SK-N-SH (cell line): ENCODE measurements at regions of chr15 and their contacts with region 1.

Region 1: GRCh38 chr15:90931737-90932659 is at the start of gene HDDC3:
- DNase-seq: peak; percentile 94
- H3K4me3 ChIP-seq: peak within 1 kb of the TSS; percentile 84 to 89
- H3K27ac ChIP-seq: peak within 1 kb of the TSS; percentile 32 to 80; a peak in 3 of 4 replicates
- H3K4me1 ChIP-seq: peaks cover 13 to 41% of the 10 kb centered on the region in 2 experiments; a peak in 2 of 4 replicates
- H3K27me3 ChIP-seq: no peaks in the 10 kb centered on the region
- CTCF ChIP-seq: peak; percentile 87
- EP300 ChIP-seq: no peak
- RAD21 ChIP-seq: peak; percentile 48
- polyA plus RNA-seq, gene HDDC3: 24.2 and 25.8 TPM in 2 replicates

Region 2: GRCh38 chr15:90886041-90886614 is 45.9 kb before region 1 on chr15:
- CTCF ChIA-PET with region 1: interaction called, 31 read pairs
- POLR2A ChIA-PET with region 1: no interaction called
- DNase-seq: peak; percentile 91
- H3K4me3 ChIP-seq: peak overlapping the region in 1 of 2 experiments; percentile 47; a peak in 1 of 4 replicates
- H3K27ac ChIP-seq: no peak overlapping the region
- H3K4me1 ChIP-seq: peaks cover 0 to 14% of the 10 kb centered on the region in 2 experiments; a peak in 1 of 4 replicates
- H3K27me3 ChIP-seq: no peaks in the 10 kb centered on the region
- CTCF ChIP-seq: peak; percentile 99
- EP300 ChIP-seq: no peak
- RAD21 ChIP-seq: peak; percentile 96

Region 3: GRCh38 chr15:90902040-90902839 is 29.8 kb before region 1 on chr15:
- CTCF ChIA-PET with region 1: interaction called, 121 read pairs
- POLR2A ChIA-PET with region 1: interaction called, 9 read pairs
- DNase-seq: peak; percentile 99
- H3K4me3 ChIP-seq: peak overlapping the region; percentile 68 to 91
- H3K27ac ChIP-seq: peak overlapping the region; percentile 62 to 92
- H3K4me1 ChIP-seq: peaks cover 3 to 11% of the 10 kb centered on the region in 2 experiments; a peak in 2 of 4 replicates
- H3K27me3 ChIP-seq: no peaks in the 10 kb centered on the region
- CTCF ChIP-seq: peak; percentile 73
- EP300 ChIP-seq: no peak
- RAD21 ChIP-seq: peak; percentile 34; the same call in 1 of the 2 replicates

Region 4: GRCh38 chr15:90921887-90922286 is 10.1 kb before region 1 on chr15:
- CTCF ChIA-PET with region 1: interaction called, 46 read pairs
- POLR2A ChIA-PET with region 1: no interaction called
- DNase-seq: no peak
- H3K4me3 ChIP-seq: no peak overlapping the region
- H3K27ac ChIP-seq: no peak overlapping the region
- H3K4me1 ChIP-seq: no peaks in the 10 kb centered on the region
- H3K27me3 ChIP-seq: no peaks in the 10 kb centered on the region
- CTCF ChIP-seq: no peak
- EP300 ChIP-seq: no peak
- RAD21 ChIP-seq: no peak

Region 5: DNA sequence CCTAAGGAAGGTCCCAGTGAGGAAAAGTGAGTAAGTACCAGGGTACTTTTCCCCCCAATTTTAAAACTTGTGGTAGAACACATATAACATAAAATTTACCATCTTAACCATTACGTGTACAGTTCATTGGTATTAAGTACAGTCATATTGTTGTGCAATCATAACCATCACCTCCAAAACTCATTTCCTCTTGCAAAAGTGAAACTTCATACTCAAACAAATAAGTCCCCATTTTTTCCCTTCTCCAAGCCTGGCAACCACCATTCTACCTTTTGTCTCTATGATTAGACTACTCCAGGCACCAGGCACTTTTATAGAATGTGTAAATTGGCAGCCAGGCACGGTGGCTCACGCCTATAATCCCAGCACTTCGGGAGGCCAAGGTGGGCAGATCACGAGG is 50.1 kb after region 1 on chr15:
- CTCF ChIA-PET with region 1: interaction called, 17 read pairs
- POLR2A ChIA-PET with region 1: no interaction called
- DNase-seq: no peak
- H3K4me3 ChIP-seq: no peak overlapping the region
- H3K27ac ChIP-seq: no peak overlapping the region
- H3K4me1 ChIP-seq: no peaks in the 10 kb centered on the region; a peak in 2 of 4 replicates
- H3K27me3 ChIP-seq: no peaks in the 10 kb centered on the region
- CTCF ChIP-seq: no peak
- EP300 ChIP-seq: no peak
- RAD21 ChIP-seq: no peak

Region 6: GRCh38 chr15:91022075-91022835 is 90.3 kb after region 1 on chr15 and contains the start of gene VPS33B:
- CTCF ChIA-PET with region 1: interaction called, 12 read pairs
- POLR2A ChIA-PET with region 1: interaction called, 3 read pairs
- DNase-seq: peak; percentile 85
- H3K4me3 ChIP-seq: peak within 1 kb of the TSS; percentile 88 to 97
- H3K27ac ChIP-seq: peak within 1 kb of the TSS; percentile 67 to 83
- H3K4me1 ChIP-seq: peaks cover 4 to 10% of the 10 kb centered on the region in 2 experiments; a peak in 3 of 4 replicates
- H3K27me3 ChIP-seq: no peaks in the 10 kb centered on the region
- CTCF ChIP-seq: no peak
- EP300 ChIP-seq: no peak
- RAD21 ChIP-seq: no peak
- polyA plus RNA-seq, gene VPS33B: 16.6 and 25.3 TPM in 2 replicates